ENCODE measurements at regions of chr16 and their contacts with region 1.

Region 1: DNA sequence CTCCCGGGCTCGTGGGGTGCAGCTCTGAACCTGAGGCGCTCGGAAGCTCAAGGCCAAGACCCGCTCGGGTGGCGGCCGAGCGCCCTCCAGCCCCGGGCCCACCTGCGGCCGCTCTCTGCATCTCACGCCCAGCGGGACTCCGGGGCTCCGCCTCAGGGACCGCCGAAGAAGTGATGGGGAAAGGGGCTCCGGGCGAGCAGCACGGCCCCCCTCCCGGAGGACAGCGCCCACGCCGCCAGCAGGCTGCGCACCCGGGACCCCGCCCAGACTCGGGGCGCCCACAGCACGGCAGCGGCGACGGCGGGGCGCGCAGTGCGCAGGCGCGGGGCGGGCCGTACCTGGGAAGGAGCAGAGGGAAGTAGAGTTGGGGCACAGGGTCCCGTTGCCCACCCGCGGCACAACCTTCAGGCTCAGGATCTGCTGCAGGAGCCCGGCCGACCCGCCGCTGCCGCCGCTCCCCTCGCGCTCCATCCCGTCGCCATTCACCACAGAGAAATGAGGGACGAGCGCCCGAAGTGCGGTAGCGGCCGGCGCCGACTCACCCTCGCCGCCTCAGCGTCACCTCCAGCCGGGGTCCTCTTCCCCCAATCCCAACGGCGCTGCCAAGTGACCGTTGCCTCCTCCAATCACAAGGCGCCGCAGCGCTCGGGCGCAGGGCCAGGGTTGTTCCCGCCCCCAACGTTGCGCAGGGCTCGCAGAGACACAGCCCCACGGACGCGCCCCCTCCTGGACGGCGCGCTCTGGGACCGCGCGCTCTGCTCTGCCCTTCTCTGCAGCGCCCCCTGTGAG is at the start of gene TMEM170A:
- DNase-seq: peak; percentile 94
- ATAC-seq: peak; percentile 96
- H3K4me3 ChIP-seq: peak within 1 kb of the TSS; percentile 89
- H3K27ac ChIP-seq: peak within 1 kb of the TSS; percentile 85
- H3K4me1 ChIP-seq: peaks cover 6% of the 10 kb centered on the region
- H3K27me3 ChIP-seq: no peaks in the 10 kb centered on the region
- CTCF ChIP-seq: peak; percentile 100; a peak in 5 of 6 replicates
- EP300 ChIP-seq: no peak
- POLR2A ChIP-seq: peak; percentile 96
- RAD21 ChIP-seq: peak; percentile 67
- polyA plus RNA-seq, gene TMEM170A: 7.3 to 7.8 TPM

Region 2: DNA sequence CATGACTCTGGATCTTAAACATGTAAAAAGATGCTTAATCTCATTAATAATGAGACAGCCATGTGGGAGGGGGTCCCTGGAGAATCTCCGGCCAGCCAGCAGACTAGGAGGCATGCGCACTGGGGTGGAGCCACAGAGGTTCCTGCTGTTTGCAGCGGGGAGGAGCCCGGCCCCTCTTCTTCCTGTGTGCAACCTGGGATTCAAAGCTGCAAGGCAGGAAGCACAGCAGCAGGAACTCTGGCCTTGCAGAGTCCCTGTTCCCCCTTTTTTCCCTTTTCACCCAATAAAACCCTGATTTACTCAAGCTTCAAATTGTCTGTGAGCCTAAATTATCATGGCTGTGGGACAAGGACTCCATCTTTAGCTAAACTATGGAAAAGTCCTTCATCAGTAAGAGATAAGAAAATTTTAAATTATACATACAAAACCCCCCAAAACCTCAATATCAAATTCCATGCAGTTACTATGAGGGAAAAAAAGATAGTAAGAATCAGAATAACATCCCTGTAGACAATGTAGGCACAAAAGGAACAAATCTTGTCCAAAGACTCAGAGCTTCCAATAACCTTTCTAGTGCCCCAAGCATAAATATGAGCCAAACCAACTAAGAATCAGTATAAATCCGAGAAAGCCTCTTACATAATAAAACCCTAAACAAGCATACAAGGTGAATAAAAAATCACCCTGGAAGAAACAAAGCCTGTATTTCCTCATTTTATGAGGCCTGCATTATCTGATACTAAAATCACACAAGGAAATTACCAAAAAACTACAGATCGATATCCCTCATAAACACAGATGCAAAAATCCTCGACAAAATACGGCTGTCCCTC is 43.1 kb before region 1 on chr16:
- CTCF ChIA-PET with region 1: interaction called, 7 read pairs
- POLR2A ChIA-PET with region 1: no interaction called
- RAD21 ChIA-PET with region 1: interaction called, 3 read pairs
- SMC1A ChIA-PET with region 1: interaction called, 3 read pairs
- in situ Hi-C with region 1: no loop called
- intact Hi-C with region 1: loop called (anchors 5 kb)
- DNase-seq: no peak
- ATAC-seq: peak; percentile 98
- H3K4me3 ChIP-seq: 0 out of 2 replicates have a peak overlapping the region, but pooled peaks have one; percentile 37
- H3K27ac ChIP-seq: peak overlapping the region; percentile 64; the same call in 1 of the 2 replicates
- H3K4me1 ChIP-seq: peaks cover 10% of the 10 kb centered on the region; the same call in 1 of the 2 replicates
- H3K27me3 ChIP-seq: no peaks in the 10 kb centered on the region
- CTCF ChIP-seq: no peak
- EP300 ChIP-seq: no peak
- POLR2A ChIP-seq: no peak
- RAD21 ChIP-seq: no peak

Region 3: DNA sequence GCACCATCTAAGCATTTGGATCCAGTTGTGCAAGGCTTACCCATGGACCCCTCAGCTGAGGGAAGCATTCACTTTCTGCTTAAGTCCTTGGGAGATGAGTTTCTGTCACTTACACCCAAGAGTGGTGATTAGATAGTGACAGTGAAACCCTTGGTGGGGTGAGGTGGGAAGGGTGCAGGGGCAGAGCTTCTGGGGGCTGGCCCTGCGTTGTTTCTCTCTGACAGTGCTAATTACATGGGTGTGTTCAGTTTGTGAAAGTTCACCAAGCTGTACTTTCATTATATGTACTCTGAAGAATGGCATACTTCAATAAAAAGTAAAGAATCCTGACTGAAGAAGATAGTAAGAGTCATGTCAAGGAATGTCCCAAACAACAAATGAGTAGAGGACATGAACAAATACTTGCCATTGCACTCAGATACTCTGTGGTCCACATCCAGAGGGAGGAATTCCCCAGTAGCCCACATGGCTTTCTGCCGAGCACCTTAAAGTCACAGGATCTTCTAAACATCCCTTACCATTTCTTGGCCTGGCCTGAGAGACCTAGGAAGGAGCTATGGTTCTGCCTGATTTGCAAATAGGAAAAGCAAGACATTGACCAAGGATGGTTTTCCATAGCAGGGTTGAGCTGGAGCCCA is 22.5 kb after region 1 on chr16:
- CTCF ChIA-PET with region 1: interaction called, 10 read pairs
- POLR2A ChIA-PET with region 1: no interaction called
- RAD21 ChIA-PET with region 1: no interaction called
- SMC1A ChIA-PET with region 1: interaction called, 3 read pairs
- in situ Hi-C with region 1: no loop called
- intact Hi-C with region 1: no loop called
- DNase-seq: peak; percentile 45
- ATAC-seq: peak; percentile 83
- H3K4me3 ChIP-seq: no peak overlapping the region
- H3K27ac ChIP-seq: peak overlapping the region; percentile 74
- H3K4me1 ChIP-seq: peaks cover 41% of the 10 kb centered on the region
- H3K27me3 ChIP-seq: no peaks in the 10 kb centered on the region
- CTCF ChIP-seq: no peak
- EP300 ChIP-seq: no peak
- POLR2A ChIP-seq: no peak
- RAD21 ChIP-seq: no peak

Region 4: GRCh38 chr16:75550211-75550662 is 85.9 kb after region 1 on chr16:
- CTCF ChIA-PET with region 1: interaction called, 23 read pairs
- POLR2A ChIA-PET with region 1: interaction called, 3 read pairs
- RAD21 ChIA-PET with region 1: interaction called, 3 read pairs
- SMC1A ChIA-PET with region 1: no interaction called
- in situ Hi-C with region 1: no loop called
- intact Hi-C with region 1: loop called (anchors 5 kb)
- DNase-seq: peak; percentile 69
- ATAC-seq: peak; percentile 89
- H3K4me3 ChIP-seq: no peak overlapping the region
- H3K27ac ChIP-seq: no peak overlapping the region
- H3K4me1 ChIP-seq: peaks cover 8% of the 10 kb centered on the region
- H3K27me3 ChIP-seq: no peaks in the 10 kb centered on the region
- CTCF ChIP-seq: peak; percentile 70 to 78 (median 77)
- EP300 ChIP-seq: no peak
- POLR2A ChIP-seq: no peak
- RAD21 ChIP-seq: peak; percentile 85

Region 5: GRCh38 chr16:77190478-77191258 is 1726.3 kb after region 1 on chr16 and contains the start of gene MON1B:
- CTCF ChIA-PET with region 1: no interaction called
- POLR2A ChIA-PET with region 1: no interaction called
- RAD21 ChIA-PET with region 1: no interaction called
- SMC1A ChIA-PET with region 1: no interaction called
- in situ Hi-C with region 1: loop called (anchors 25 kb)
- intact Hi-C with region 1: no loop called
- DNase-seq: peak; percentile 96
- ATAC-seq: peak; percentile 98
- H3K4me3 ChIP-seq: peak within 1 kb of the TSS; percentile 99
- H3K27ac ChIP-seq: peak within 1 kb of the TSS; percentile 87
- H3K4me1 ChIP-seq: no peaks in the 10 kb centered on the region; the same call in 1 of the 2 replicates
- H3K27me3 ChIP-seq: no peaks in the 10 kb centered on the region
- CTCF ChIP-seq: no peak
- EP300 ChIP-seq: 0 out of 4 replicates have a peak, but pooled peaks of 1 of the 2 experiments have one; percentile 10
- POLR2A ChIP-seq: peak; percentile 93
- RAD21 ChIP-seq: no peak
- polyA plus RNA-seq, gene MON1B: 5.7 to 7.6 TPM

Measured in GM12878 (cell line).